Right cardiac atrium (tissue), 5 donors: ENCODE measurements at regions of chr19 and their contacts with region 1.

Region 1: GRCh38 chr19:13794757-13795589 is at the start of gene ZSWIM4:
- DNase-seq: peak; percentile 99 to 100 (median 100)
- ATAC-seq: peak; percentile 97 to 98
- H3K4me3 ChIP-seq: peak within 1 kb of the TSS; percentile 97
- H3K27ac ChIP-seq: peak within 1 kb of the TSS; percentile 86
- H3K4me1 ChIP-seq: peaks cover 6% of the 10 kb centered on the region
- H3K27me3 ChIP-seq: no peaks in the 10 kb centered on the region
- total RNA-seq, gene ZSWIM4: 3.4 to 6.4 (median 3.5) TPM

Region 2: GRCh38 chr19:13833330-13834243 is 38.6 kb after region 1 on chr19:
- intact Hi-C with region 1: loop called in 1 of 4 experiments (anchors 5 kb)
- DNase-seq: peak; percentile 96 to 99 (median 98)
- ATAC-seq: peak; percentile 80 to 89
- H3K4me3 ChIP-seq: no peak overlapping the region
- H3K27ac ChIP-seq: peak overlapping the region; percentile 43
- H3K4me1 ChIP-seq: peaks cover 10% of the 10 kb centered on the region
- H3K27me3 ChIP-seq: no peaks in the 10 kb centered on the region

Region 3: DNA sequence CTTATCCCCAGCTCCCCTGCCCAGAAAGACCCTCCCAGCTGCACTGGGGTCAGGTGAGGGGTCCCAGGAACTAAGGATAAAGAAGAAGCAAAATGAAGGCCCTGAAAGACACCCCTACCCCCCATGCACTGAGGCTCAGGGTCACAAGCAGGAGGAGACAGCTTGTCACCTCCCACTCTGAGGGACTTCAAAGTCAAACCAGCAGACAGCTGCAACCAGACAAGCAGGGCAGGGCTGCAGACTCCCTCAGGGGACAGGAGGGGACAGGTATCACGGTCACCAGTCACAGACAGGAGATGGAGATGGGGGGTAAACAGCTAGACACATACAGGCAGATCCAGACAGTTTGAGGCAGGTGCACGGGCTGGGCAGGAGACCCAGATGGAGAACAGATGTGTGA is 75.9 kb after region 1 on chr19:
- intact Hi-C with region 1: no loop called
- DNase-seq: no peak
- ATAC-seq: no peak
- H3K4me3 ChIP-seq: no peak overlapping the region
- H3K27ac ChIP-seq: no peak overlapping the region
- H3K4me1 ChIP-seq: no peaks in the 10 kb centered on the region
- H3K27me3 ChIP-seq: no peaks in the 10 kb centered on the region

Region 4: GRCh38 chr19:13978347-13978733 is 183.4 kb after region 1 on chr19:
- intact Hi-C with region 1: no loop called
- DNase-seq: peak; percentile 89 to 96 (median 96)
- ATAC-seq: peak; percentile 88 to 91
- H3K4me3 ChIP-seq: peak overlapping the region; percentile 62
- H3K27ac ChIP-seq: peak overlapping the region; percentile 22
- H3K4me1 ChIP-seq: peaks cover 9% of the 10 kb centered on the region
- H3K27me3 ChIP-seq: no peaks in the 10 kb centered on the region